ENCODE measurements at regions of chr14 and their contacts with region 1.

Region 1: GRCh38 chr14:59254146-59254941 is 65.9 kb downstream of the DAAM1 start:
- DNase-seq: peak; percentile 81
- ATAC-seq: peak; percentile 93

Region 2: GRCh38 chr14:59197695-59198262 is 56.6 kb before region 1 on chr14:
- intact Hi-C with region 1: no loop called
- DNase-seq: no peak
- ATAC-seq: peak; percentile 68

Region 3: DNA sequence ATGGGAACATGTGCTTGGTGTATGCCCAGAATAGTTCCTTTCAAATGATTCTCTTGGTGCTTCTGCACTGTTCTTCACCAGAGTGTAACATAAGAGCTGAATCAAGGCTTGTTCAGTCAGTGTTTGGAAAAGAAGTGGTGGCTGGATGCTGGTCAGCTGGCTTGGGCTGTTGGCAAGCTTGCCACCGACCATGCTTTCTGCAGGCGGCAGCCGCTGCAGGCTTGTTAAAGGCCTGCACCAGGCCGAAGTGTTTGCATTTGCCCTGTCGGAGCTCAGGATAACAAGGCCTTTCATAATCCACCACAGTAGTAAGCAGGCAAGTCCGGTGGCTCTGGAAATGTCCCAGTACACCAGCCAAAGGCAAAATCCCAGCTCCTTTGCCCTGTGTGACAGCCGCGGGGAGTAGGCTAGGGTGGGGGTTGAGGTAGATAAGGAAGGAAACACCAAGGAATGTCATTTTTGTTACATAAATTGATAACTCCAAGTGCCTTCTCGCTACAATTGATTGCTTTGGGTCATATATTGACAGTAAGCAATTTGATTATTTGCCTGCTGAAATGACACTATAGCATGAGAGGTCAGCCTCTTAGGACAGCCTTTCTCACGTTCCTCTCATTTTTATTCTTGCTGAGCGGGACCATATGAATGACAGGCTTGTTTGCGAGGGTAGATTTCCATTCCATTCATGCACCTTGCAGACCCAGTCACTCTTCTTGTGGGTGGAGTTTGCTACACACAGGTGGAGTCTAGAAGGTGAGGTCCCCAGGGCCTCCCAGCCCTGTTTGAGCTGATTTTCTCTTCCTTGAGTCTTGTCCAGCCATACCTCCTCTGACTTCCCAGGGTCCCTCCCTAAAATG is 38.8 kb before region 1 on chr14:
- intact Hi-C with region 1: loop called (anchors 5 kb)
- DNase-seq: peak; percentile 82
- ATAC-seq: peak; percentile 94

Region 4: DNA sequence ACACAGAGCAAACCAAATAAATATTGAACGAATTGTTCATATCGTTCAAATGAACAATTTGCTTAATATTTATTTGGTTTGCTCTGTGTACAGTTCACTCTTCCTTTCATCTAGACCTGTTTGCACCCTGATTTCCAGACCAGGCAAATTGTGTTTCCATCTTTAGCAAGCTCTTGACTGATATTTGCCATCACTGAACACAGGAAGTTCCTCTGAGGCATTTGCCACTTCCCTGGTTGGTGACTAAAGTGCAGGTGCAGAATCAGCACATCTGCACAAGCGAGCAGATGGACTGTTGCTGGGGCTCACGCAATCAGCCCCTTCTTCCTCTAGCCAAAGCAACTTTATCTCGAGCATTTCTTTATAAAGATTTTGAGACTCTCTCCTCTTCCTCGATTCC is 47.0 kb after region 1 on chr14:
- intact Hi-C with region 1: no loop called
- DNase-seq: no peak
- ATAC-seq: no peak

Region 5: DNA sequence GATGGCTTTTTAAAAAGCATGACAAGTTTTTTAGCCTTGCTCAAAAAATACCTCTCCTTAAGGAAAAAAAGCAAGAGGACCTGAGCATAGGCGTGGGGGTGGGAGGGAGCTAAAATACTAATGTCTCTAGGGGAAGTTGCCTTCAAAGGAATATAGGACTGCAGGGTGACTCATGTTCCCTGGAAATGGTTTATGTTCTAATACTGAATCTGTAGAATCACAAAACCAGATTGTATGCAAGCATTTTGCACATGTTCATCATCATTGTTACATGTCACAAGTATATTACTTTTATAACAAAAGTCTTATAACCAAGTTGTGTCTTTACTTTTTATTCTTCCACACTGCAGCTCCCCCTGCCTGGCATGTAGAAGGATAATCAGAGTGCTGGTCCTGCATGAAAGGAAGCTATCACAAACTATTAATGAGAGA is 174.3 kb after region 1 on chr14:
- intact Hi-C with region 1: loop called (anchors 10 kb)
- DNase-seq: no peak
- ATAC-seq: no peak

Measured in Right ventricle myocardium inferior (tissue), 1 donor.